ENCODE measurements at regions of chr16 and their contacts with region 1.

Region 1: DNA sequence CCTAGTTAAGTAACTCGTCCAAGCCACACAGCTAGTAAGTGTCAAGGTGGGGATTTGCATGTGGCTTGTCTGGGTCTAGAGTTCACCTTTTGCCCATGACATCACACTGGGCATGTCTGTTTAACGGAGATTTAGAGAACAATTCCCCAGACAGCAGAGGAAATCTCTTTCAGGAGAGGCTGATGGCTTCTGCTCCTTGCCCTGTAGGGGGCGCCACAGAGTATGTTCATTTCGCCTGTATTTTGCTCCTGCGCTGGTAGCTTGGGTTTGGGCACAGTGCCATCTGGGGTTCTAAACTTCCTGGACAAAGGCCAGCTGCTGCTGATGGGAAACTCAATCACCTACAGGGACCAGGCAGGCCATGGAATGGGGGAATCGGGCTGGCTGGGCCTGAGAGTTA is 20.4 kb downstream of the OTOA start:
- DNase-seq: peak; percentile 57
- H3K4me3 Mint-ChIP-seq: no peak overlapping the region
- H3K27ac Mint-ChIP-seq: no peak overlapping the region
- H3K4me1 Mint-ChIP-seq: no peaks in the 10 kb centered on the region
- H3K27me3 Mint-ChIP-seq: peaks cover 3% of the 10 kb centered on the region

Region 2: GRCh38 chr16:21574381-21574780 is 109.8 kb before region 1 on chr16:
- CTCF ChIA-PET with region 1: no interaction called
- POLR2A ChIA-PET with region 1: no interaction called
- intact Hi-C with region 1: no loop called
- DNase-seq: no peak
- H3K4me3 Mint-ChIP-seq: no peak overlapping the region
- H3K27ac Mint-ChIP-seq: no peak overlapping the region
- H3K4me1 Mint-ChIP-seq: no peaks in the 10 kb centered on the region
- H3K27me3 Mint-ChIP-seq: no peaks in the 10 kb centered on the region

Region 3: DNA sequence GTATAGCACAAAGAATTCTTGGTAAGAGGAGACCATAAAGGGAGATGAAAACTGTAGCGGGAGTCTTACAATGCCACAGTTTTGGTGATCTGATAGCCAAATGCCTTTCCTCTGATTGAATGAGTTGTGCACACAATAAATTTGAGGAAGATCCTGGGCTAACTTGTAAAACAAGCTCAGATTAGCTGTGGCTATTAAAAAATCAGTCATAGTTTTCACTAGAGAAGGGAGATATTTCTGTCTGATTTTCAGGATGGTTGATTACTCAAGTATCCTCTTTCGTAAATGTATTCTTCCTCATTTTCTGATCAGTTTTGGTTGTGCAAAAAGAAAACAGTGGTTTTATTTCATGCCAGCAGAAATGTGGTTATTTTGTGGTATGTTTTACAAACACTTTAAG is 93.9 kb before region 1 on chr16:
- CTCF ChIA-PET with region 1: no interaction called
- POLR2A ChIA-PET with region 1: no interaction called
- intact Hi-C with region 1: no loop called
- DNase-seq: no peak
- H3K4me3 Mint-ChIP-seq: no peak overlapping the region
- H3K27ac Mint-ChIP-seq: no peak overlapping the region
- H3K4me1 Mint-ChIP-seq: no peaks in the 10 kb centered on the region
- H3K27me3 Mint-ChIP-seq: no peaks in the 10 kb centered on the region

Region 4: DNA sequence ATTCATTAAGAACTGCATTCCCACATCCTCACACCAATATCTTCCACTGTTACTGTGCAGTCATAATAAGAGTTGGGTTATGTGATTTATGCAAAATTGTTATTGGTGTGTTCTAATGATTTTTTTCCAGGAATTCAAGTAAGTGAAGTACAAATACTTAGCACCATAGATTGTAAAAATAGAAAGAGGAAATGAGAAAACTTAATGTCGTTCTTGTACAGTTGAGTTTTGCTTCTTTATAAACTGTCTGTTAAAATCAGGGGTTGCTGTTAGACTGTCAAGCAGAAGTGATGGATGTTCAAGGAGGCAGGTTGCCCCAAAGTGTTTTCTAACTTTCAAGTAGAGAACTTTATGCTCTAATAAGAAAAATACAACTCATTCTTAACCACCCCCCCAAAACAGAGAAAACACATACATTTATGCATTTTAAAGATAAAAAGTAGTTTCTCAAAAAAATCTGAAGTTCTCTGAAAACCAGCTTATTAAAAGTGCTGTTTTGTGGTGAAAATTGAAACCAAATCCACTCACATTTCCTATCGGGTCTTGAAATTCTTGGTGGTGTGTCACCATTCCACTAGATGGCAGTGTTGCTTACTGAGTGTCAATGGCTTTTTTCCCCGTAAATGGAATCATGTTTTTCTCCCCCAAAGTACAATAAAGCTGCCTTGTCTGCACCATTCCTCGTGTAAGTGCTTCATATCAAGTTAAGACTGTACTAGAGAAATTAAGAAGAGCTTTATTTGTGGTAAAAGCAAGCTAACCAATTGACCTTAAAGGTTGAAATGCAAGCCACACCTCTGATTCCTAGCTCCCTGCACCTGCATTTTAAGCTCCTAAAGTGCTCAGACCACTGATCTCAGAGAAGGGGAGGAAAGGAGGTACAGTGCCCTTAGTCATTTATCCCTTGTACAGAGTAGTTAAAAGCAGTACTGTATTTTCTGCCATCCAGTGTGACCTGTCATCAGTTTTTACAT is 27.1 kb before region 1 on chr16:
- CTCF ChIA-PET with region 1: interaction called, 17 read pairs
- POLR2A ChIA-PET with region 1: no interaction called
- intact Hi-C with region 1: no loop called
- DNase-seq: peak; percentile 29
- H3K4me3 Mint-ChIP-seq: no peak overlapping the region
- H3K27ac Mint-ChIP-seq: no peak overlapping the region
- H3K4me1 Mint-ChIP-seq: peaks cover 41% of the 10 kb centered on the region
- H3K27me3 Mint-ChIP-seq: no peaks in the 10 kb centered on the region

Region 5: DNA sequence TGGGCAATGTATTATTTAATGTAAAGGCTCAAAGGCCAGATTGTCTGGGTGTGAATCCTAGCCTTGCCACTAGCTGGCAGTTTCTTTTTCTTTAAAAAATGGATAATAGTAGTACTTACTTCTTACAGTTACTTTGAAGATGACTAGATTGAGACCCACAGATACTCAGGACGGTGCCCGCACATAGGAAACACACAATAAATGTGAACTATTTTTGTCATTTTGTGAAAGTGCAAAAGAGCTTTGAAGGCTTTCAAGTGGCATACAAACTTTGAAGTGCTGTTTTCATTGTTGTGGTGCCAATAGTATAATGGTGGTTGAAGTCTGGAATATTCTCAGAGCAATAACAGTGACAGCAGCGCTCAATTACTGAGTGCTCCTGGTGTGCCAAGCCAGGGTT is 43.1 kb after region 1 on chr16:
- CTCF ChIA-PET with region 1: no interaction called
- POLR2A ChIA-PET with region 1: no interaction called
- intact Hi-C with region 1: no loop called
- DNase-seq: no peak
- H3K4me3 Mint-ChIP-seq: no peak overlapping the region
- H3K27ac Mint-ChIP-seq: no peak overlapping the region
- H3K4me1 Mint-ChIP-seq: peaks cover 7% of the 10 kb centered on the region
- H3K27me3 Mint-ChIP-seq: peaks cover 3% of the 10 kb centered on the region